IMR-90 (cell line): ENCODE measurements at regions of chr16 and their contacts with region 1.

Region 1: GRCh38 chr16:72241930-72242329 is 70.0 kb upstream of the PMFBP1 start:
- DNase-seq: peak; percentile 55
- ATAC-seq: peak; percentile 100
- H3K4me3 ChIP-seq: no peak overlapping the region
- H3K27ac ChIP-seq: no peak overlapping the region
- H3K4me1 ChIP-seq: no peaks in the 10 kb centered on the region
- H3K27me3 ChIP-seq: no peaks in the 10 kb centered on the region
- CTCF ChIP-seq: peak; percentile 92
- POLR2A ChIP-seq: peak; percentile 55
- RAD21 ChIP-seq: peak; percentile 95

Region 2: DNA sequence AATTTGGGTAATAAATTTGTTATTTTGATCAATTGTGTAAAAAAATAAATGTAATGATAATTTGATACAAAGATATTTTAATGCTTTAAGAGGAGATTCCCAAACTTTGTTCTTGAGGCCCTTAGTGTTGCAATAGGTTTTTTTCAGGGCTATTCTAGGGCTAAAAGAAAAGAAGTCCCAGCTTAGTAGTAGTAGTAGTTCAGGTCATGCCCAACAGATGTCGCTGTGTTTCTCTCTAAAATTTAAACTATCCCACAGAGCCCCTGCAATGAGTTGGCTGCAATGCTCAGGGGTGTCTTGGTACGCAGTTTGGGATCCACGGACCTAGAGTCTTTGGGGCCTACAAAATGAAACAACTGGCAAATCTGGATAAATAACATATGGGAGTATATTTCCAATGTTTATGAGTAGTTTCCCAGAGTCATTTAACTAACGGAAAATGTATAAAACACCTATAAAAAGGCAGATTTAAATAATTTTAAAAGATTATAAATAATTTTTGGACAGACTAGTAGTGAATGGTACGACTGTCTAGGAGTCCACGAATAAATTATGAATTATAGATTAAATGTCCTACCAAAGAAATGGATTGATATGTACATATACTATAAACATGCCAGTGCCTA is 158.4 kb after region 1 on chr16:
- CTCF ChIA-PET with region 1: no interaction called
- POLR2A ChIA-PET with region 1: no interaction called
- dilution Hi-C with region 1: no loop called
- in situ Hi-C with region 1: no loop called
- intact Hi-C with region 1: loop called (anchors 2 kb)
- DNase-seq: peak; percentile 62
- ATAC-seq: peak; percentile 91
- H3K4me3 ChIP-seq: no peak overlapping the region
- H3K27ac ChIP-seq: no peak overlapping the region
- H3K4me1 ChIP-seq: no peaks in the 10 kb centered on the region; the same call in 1 of the 2 replicates
- H3K27me3 ChIP-seq: no peaks in the 10 kb centered on the region
- CTCF ChIP-seq: peak; percentile 66
- POLR2A ChIP-seq: no peak
- RAD21 ChIP-seq: peak; percentile 54

Region 3: GRCh38 chr16:72467157-72467759 is 225.3 kb after region 1 on chr16:
- CTCF ChIA-PET with region 1: interaction called, 15 read pairs
- POLR2A ChIA-PET with region 1: interaction called, 9 read pairs
- dilution Hi-C with region 1: loop called (anchors 25 kb)
- in situ Hi-C with region 1: loop called (anchors 5 kb)
- intact Hi-C with region 1: loop called (anchors 1 kb)
- DNase-seq: peak; percentile 60
- ATAC-seq: peak; percentile 79
- H3K4me3 ChIP-seq: no peak overlapping the region
- H3K27ac ChIP-seq: no peak overlapping the region
- H3K4me1 ChIP-seq: no peaks in the 10 kb centered on the region
- H3K27me3 ChIP-seq: no peaks in the 10 kb centered on the region
- CTCF ChIP-seq: peak; percentile 75
- POLR2A ChIP-seq: no peak
- RAD21 ChIP-seq: peak; percentile 73

Region 4: DNA sequence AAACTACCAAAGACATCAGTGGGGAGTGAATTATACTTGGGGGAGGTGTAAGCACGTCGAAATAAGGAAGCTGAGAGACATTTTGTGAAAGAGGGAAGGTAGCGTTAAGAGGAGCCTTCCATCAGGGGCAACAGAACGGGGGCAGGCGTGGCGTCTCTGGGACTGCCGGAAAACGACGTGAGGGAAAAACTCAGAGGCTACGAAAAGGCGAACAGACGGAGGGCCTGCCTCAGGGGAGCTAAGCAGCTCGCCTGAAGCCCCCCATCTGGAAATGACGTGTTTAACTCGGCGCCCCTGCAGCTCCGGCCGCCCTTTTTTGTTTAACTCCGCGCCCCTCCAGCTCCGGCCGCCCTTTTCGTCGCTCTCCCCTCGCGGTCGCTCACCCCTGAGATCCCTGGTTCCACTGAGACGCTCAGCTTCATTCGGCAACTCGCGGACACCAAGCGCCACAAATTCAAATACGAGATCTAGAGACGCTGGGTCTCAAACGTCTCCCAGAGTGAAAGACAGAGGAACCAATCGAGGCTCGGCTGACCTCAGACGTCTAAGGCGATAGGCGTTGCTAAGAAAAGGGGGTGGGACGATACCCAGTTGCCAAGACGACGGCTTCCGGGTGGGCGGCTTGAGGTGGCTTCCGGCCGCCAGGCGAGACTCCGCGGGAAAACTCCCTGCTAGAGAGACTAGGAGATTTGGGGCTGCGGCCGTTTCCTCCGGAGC is 422.7 kb after region 1 on chr16:
- CTCF ChIA-PET with region 1: no interaction called
- POLR2A ChIA-PET with region 1: no interaction called
- dilution Hi-C with region 1: no loop called
- in situ Hi-C with region 1: no loop called
- intact Hi-C with region 1: loop called (anchors 10 kb)
- DNase-seq: peak; percentile 99
- ATAC-seq: peak; percentile 100
- H3K4me3 ChIP-seq: peak overlapping the region; percentile 65
- H3K27ac ChIP-seq: peak overlapping the region; percentile 26; the same call in 1 of the 2 replicates
- H3K4me1 ChIP-seq: no peaks in the 10 kb centered on the region
- H3K27me3 ChIP-seq: no peaks in the 10 kb centered on the region
- CTCF ChIP-seq: no peak
- POLR2A ChIP-seq: peak; percentile 67; the same call in 1 of the 2 replicates
- RAD21 ChIP-seq: no peak

Region 5: GRCh38 chr16:72787514-72788268 is 545.8 kb after region 1 on chr16:
- CTCF ChIA-PET with region 1: no interaction called
- POLR2A ChIA-PET with region 1: no interaction called
- dilution Hi-C with region 1: no loop called
- in situ Hi-C with region 1: no loop called
- intact Hi-C with region 1: loop called (anchors 5 kb)
- DNase-seq: peak; percentile 94
- ATAC-seq: peak; percentile 87
- H3K4me3 ChIP-seq: peak overlapping the region; percentile 76
- H3K27ac ChIP-seq: peak overlapping the region; percentile 85
- H3K4me1 ChIP-seq: peaks cover 7% of the 10 kb centered on the region
- H3K27me3 ChIP-seq: no peaks in the 10 kb centered on the region
- CTCF ChIP-seq: no peak
- POLR2A ChIP-seq: no peak
- RAD21 ChIP-seq: no peak

Region 6: GRCh38 chr16:73878611-73879010 is 1636.7 kb after region 1 on chr16:
- CTCF ChIA-PET with region 1: no interaction called
- POLR2A ChIA-PET with region 1: no interaction called
- dilution Hi-C with region 1: no loop called
- in situ Hi-C with region 1: loop called (anchors 25 kb)
- intact Hi-C with region 1: loop called (anchors 5 kb)
- DNase-seq: peak; percentile 76
- ATAC-seq: peak; percentile 77
- H3K4me3 ChIP-seq: no peak overlapping the region
- H3K27ac ChIP-seq: no peak overlapping the region
- H3K4me1 ChIP-seq: no peaks in the 10 kb centered on the region
- H3K27me3 ChIP-seq: no peaks in the 10 kb centered on the region
- CTCF ChIP-seq: peak; percentile 67
- POLR2A ChIP-seq: no peak
- RAD21 ChIP-seq: peak; percentile 84

Region 7: GRCh38 chr16:74034862-74035261 is 1792.9 kb after region 1 on chr16:
- CTCF ChIA-PET with region 1: no interaction called
- POLR2A ChIA-PET with region 1: no interaction called
- dilution Hi-C with region 1: no loop called
- in situ Hi-C with region 1: no loop called
- intact Hi-C with region 1: loop called (anchors 10 kb)
- DNase-seq: peak; percentile 11
- ATAC-seq: peak; percentile 56; the same call in 1 of the 2 replicates
- H3K4me3 ChIP-seq: no peak overlapping the region
- H3K27ac ChIP-seq: no peak overlapping the region
- H3K4me1 ChIP-seq: no peaks in the 10 kb centered on the region
- H3K27me3 ChIP-seq: no peaks in the 10 kb centered on the region; the same call in 1 of the 2 replicates
- CTCF ChIP-seq: 0 out of 2 replicates have a peak, but pooled peaks have one; percentile 29
- POLR2A ChIP-seq: no peak
- RAD21 ChIP-seq: peak; percentile 37